ENCODE measurements at regions of chr5 and their contacts with region 1.

Region 1: DNA sequence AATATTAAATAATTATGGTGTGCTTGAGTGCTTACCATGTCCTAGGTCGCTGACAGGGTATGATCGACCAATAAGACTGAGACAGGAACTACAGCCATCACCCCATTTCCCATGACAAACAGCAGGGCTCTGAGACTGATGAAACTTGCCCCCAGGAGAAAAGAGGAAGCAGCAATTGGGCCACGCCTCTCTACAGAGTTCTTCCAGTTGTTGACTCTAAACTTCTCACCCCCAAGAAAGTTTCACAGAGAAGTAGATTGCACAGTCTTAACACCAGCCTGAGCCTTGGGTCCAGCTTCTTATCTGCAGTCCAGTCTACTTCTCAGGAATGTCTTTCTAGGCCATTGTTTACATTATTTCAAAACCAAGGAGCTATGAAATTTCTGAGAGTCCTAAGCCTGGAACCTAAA is 182.2 kb upstream of the ANKRD55 start:
- DNase-seq: peak; percentile 48
- ATAC-seq: peak; percentile 71
- H3K4me3 Mint-ChIP-seq: peak overlapping the region; percentile 78
- H3K27ac Mint-ChIP-seq: peak overlapping the region; percentile 99
- H3K4me1 Mint-ChIP-seq: peaks cover 82% of the 10 kb centered on the region
- H3K27me3 Mint-ChIP-seq: no peaks in the 10 kb centered on the region
- CTCF ChIP-seq: no peak

Region 2: GRCh38 chr5:56319526-56320181 is 95.7 kb before region 1 on chr5:
- CTCF ChIA-PET with region 1: no interaction called
- POLR2A ChIA-PET with region 1: interaction called, 5 read pairs
- intact Hi-C with region 1: loop called (anchors 2 kb)
- DNase-seq: no peak
- ATAC-seq: no peak
- H3K4me3 Mint-ChIP-seq: no peak overlapping the region
- H3K27ac Mint-ChIP-seq: no peak overlapping the region
- H3K4me1 Mint-ChIP-seq: peaks cover 41% of the 10 kb centered on the region
- H3K27me3 Mint-ChIP-seq: no peaks in the 10 kb centered on the region
- CTCF ChIP-seq: no peak

Region 3: DNA sequence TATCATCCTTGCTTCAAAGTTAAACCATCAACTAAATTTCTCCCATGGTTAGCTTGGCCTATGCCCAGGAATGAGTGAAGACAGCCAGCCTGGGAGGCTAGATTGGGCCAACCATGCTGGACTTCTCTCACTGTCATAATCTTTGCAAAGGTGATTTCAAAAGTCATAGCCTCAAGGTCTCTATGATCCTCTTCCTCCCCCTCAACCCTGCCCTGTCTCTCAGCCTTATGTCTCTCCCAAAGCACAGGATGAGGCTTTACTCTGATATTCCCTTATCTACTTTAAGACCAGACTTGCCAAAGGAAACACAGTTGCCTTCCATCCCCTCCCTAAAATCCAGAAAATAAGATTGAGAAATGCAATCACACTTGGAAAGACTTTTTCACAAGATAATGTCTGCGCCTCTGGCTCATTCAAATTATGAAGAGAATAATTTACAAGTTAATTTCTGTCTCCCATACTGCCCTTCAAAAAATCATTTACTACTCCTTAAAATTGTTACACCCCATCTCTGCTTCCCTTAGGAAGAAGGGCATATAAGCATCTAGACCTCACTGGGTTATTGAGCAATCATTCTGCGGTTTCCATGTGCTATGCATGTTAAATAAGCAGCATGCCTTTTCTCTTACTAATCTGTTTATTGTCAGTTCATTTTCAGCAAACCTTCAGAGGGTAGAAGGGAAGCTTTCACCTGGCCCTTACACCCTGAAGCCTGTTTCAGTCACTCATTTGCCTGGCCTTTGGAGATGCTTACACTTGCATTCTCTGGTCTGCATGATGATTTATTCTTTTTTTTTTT is 68.4 kb before region 1 on chr5:
- CTCF ChIA-PET with region 1: no interaction called
- POLR2A ChIA-PET with region 1: no interaction called
- intact Hi-C with region 1: loop called (anchors 5 kb)
- DNase-seq: no peak
- ATAC-seq: no peak
- H3K4me3 Mint-ChIP-seq: no peak overlapping the region
- H3K27ac Mint-ChIP-seq: no peak overlapping the region
- H3K4me1 Mint-ChIP-seq: peaks cover 53% of the 10 kb centered on the region
- H3K27me3 Mint-ChIP-seq: no peaks in the 10 kb centered on the region
- CTCF ChIP-seq: no peak

Region 4: GRCh38 chr5:56588636-56589480 is 173.5 kb after region 1 on chr5:
- CTCF ChIA-PET with region 1: no interaction called
- POLR2A ChIA-PET with region 1: interaction called, 3 read pairs
- intact Hi-C with region 1: loop called (anchors 1 kb)
- DNase-seq: peak; percentile 69
- ATAC-seq: peak; percentile 86
- H3K4me3 Mint-ChIP-seq: peak overlapping the region; percentile 64
- H3K27ac Mint-ChIP-seq: peak overlapping the region; percentile 97
- H3K4me1 Mint-ChIP-seq: peaks cover 69% of the 10 kb centered on the region
- H3K27me3 Mint-ChIP-seq: no peaks in the 10 kb centered on the region
- CTCF ChIP-seq: no peak

Region 5: GRCh38 chr5:56737002-56737621 is 321.8 kb after region 1 on chr5:
- CTCF ChIA-PET with region 1: no interaction called
- POLR2A ChIA-PET with region 1: no interaction called
- intact Hi-C with region 1: loop called (anchors 5 kb)
- DNase-seq: no peak
- ATAC-seq: peak; percentile 29
- H3K4me3 Mint-ChIP-seq: peak overlapping the region; percentile 25
- H3K27ac Mint-ChIP-seq: peak overlapping the region; percentile 83
- H3K4me1 Mint-ChIP-seq: peaks cover 62% of the 10 kb centered on the region
- H3K27me3 Mint-ChIP-seq: no peaks in the 10 kb centered on the region
- CTCF ChIP-seq: no peak

Region 6: DNA sequence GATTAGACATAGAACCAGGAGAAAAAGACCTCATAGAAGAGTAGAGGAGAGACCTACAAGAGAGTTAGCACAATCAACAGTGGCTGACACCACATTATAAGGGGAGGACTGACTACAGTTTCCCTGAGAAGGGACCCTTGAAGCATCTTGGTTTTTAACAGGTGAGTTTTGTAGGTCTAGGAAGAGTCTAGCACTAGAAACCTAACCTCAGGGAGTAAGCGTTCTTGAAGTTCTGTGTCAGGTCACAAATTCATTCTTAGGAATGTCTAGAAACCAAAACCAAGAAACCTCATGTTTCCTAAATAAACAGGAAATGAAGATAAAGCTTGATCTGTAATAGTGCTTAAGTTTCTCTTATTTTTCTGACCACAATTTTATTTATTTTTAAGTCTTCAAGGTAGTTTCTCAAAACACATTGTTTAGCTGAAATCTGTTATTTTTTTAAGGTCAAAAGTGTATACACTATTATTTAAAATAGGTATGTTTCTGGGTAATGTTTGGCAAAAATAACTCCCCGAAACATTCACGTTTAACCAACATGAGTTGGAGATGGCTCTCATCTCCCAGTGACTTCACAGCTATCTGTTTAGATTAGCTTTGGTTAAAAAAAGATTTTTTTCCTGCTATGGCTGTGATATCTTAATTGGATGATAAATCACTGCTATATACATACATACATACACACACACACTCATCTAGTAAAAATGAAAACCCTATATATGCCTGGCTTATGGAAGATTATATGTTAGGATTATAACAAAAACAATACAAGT is 437.1 kb after region 1 on chr5:
- CTCF ChIA-PET with region 1: no interaction called
- POLR2A ChIA-PET with region 1: no interaction called
- intact Hi-C with region 1: no loop called
- DNase-seq: no peak
- ATAC-seq: no peak
- H3K4me3 Mint-ChIP-seq: peak overlapping the region; percentile 54
- H3K27ac Mint-ChIP-seq: peak overlapping the region; percentile 8
- H3K4me1 Mint-ChIP-seq: peaks cover 95% of the 10 kb centered on the region
- H3K27me3 Mint-ChIP-seq: no peaks in the 10 kb centered on the region
- CTCF ChIP-seq: no peak